ENCODE measurements at regions of chr6 and their contacts with region 1.

Region 1: GRCh38 chr6:163443985-163444533 is 29.5 kb downstream of the QKI start:
- DNase-seq: no peak
- H3K4me3 ChIP-seq: no peak overlapping the region
- H3K27me3 ChIP-seq: no peaks in the 10 kb centered on the region
- CTCF ChIP-seq: no peak; the same call in 1 of the 2 replicates

Region 2: DNA sequence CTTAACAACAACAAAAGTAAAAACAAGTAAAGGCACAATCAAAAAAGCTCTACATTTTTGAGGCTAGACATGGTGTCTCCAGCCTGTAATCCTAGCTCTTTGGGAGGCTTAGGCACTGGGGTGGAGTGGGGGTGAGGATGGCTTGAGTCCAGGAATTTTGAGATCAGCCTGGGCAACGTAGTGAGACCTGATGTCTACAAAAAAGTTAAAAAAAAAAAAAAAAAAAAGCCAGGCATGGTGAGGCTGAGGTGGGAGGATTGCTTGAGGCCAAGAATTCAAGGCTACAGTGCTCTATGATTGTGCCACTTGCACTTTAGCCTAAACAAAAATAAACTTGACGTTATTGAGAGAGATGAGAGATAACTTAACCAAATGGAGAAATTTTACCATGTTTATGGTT is 30.5 kb after region 1 on chr6:
- CTCF ChIA-PET with region 1: no interaction called
- POLR2A ChIA-PET with region 1: interaction called, 12 read pairs
- DNase-seq: no peak
- H3K4me3 ChIP-seq: no peak overlapping the region
- H3K27me3 ChIP-seq: no peaks in the 10 kb centered on the region
- CTCF ChIP-seq: no peak

Measured in BJ (cell line).